A673 (cell line): ENCODE measurements at regions of chr3 and their contacts with region 1.

Region 1: GRCh38 chr3:94758751-94759150 is 695.9 kb downstream of the NSUN3 start:
- DNase-seq: no peak
- H3K4me3 ChIP-seq: no peak overlapping the region
- H3K27ac ChIP-seq: no peak overlapping the region
- H3K4me1 ChIP-seq: no peaks in the 10 kb centered on the region
- H3K27me3 ChIP-seq: no peaks in the 10 kb centered on the region
- CTCF ChIP-seq: no peak

Region 2: GRCh38 chr3:94101851-94102250 is 656.9 kb before region 1 on chr3:
- CTCF ChIA-PET with region 1: interaction called, 12 read pairs
- POLR2A ChIA-PET with region 1: no interaction called
- intact Hi-C with region 1: no loop called
- DNase-seq: peak; percentile 34
- H3K4me3 ChIP-seq: no peak overlapping the region
- H3K27ac ChIP-seq: no peak overlapping the region
- H3K4me1 ChIP-seq: peaks cover 5% of the 10 kb centered on the region
- H3K27me3 ChIP-seq: no peaks in the 10 kb centered on the region
- CTCF ChIP-seq: peak; percentile 42

Region 3: DNA sequence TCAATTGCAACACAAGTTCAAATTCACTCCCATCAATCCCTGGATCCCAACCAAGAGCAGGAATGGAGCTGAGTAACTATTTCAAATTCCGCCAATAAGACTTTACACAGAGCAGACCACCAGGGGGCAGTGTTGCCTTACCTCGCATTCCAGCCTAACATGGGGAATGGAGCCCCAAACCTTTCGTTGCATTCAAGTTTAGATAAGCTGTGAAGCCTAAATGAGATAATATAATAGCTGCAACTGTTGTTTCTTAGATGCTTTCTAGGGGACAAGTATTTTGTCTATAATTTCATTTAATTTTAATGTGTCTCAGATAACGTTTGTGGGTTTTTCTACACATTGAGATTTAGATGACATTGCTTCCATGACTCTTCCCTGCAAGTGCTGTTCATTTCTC is 509.2 kb before region 1 on chr3:
- CTCF ChIA-PET with region 1: no interaction called
- POLR2A ChIA-PET with region 1: no interaction called
- intact Hi-C with region 1: no loop called
- DNase-seq: peak; percentile 80
- H3K4me3 ChIP-seq: no peak overlapping the region
- H3K27ac ChIP-seq: no peak overlapping the region
- H3K4me1 ChIP-seq: peaks cover 9% of the 10 kb centered on the region
- H3K27me3 ChIP-seq: peaks cover 6% of the 10 kb centered on the region
- CTCF ChIP-seq: peak; percentile 95

Region 4: DNA sequence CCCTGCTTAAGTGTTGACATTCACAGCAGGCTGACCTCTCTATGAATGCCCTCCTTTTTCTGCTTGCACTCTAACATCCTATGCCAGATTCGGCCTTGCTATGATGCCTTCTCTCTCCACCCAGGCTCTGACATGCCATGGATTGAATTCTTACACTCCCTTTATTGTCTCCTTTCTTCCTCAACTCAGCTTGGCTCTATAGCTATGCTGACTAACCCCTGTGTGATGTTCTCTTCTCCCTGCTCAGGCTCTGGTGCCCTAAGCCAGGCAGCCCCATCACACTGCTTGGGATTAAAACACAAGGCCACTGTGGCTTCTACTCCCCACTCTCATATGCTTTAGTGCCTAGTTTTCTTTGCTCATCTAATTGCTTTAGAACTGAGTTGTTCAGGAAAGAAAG is 132.2 kb before region 1 on chr3:
- CTCF ChIA-PET with region 1: no interaction called
- POLR2A ChIA-PET with region 1: no interaction called
- intact Hi-C with region 1: no loop called
- DNase-seq: no peak
- H3K4me3 ChIP-seq: no peak overlapping the region
- H3K27ac ChIP-seq: no peak overlapping the region
- H3K4me1 ChIP-seq: no peaks in the 10 kb centered on the region
- H3K27me3 ChIP-seq: no peaks in the 10 kb centered on the region
- CTCF ChIP-seq: no peak